ENCODE measurements at regions of chr11 and their contacts with region 1.

Region 1: GRCh38 chr11:76207642-76208401 is 1.5 kb upstream of the WNT11 start:
- DNase-seq: peak; percentile 59 to 88 (median 76)
- ATAC-seq: peak; percentile 78
- H3K4me3 ChIP-seq: peak overlapping the region; percentile 63 to 66
- H3K4me3 Mint-ChIP-seq: peak overlapping the region; percentile 82
- H3K27ac ChIP-seq: no peak overlapping the region
- H3K27ac Mint-ChIP-seq: no peak overlapping the region
- H3K4me1 ChIP-seq: peaks cover 39% of the 10 kb centered on the region
- H3K4me1 Mint-ChIP-seq: peaks cover 24% of the 10 kb centered on the region
- H3K27me3 ChIP-seq: peaks cover 13 to 42% of the 10 kb centered on the region in 2 experiments
- H3K27me3 Mint-ChIP-seq: peaks cover 33% of the 10 kb centered on the region
- CTCF ChIP-seq: peak; percentile 90

Region 2: GRCh38 chr11:75195121-75195551 is 1012.7 kb before region 1 on chr11:
- CTCF ChIA-PET with region 1: no interaction called
- POLR2A ChIA-PET with region 1: no interaction called
- intact Hi-C with region 1: no loop called
- DNase-seq: no peak
- ATAC-seq: no peak
- H3K4me3 ChIP-seq: no peak overlapping the region
- H3K4me3 Mint-ChIP-seq: no peak overlapping the region
- H3K27ac ChIP-seq: no peak overlapping the region
- H3K27ac Mint-ChIP-seq: no peak overlapping the region
- H3K4me1 ChIP-seq: no peaks in the 10 kb centered on the region
- H3K4me1 Mint-ChIP-seq: no peaks in the 10 kb centered on the region
- H3K27me3 ChIP-seq: peaks cover 0 to 3% of the 10 kb centered on the region in 2 experiments
- H3K27me3 Mint-ChIP-seq: peaks cover 3% of the 10 kb centered on the region
- CTCF ChIP-seq: no peak

Region 3: GRCh38 chr11:75814686-75815344 is 393.0 kb before region 1 on chr11 and contains the start of gene UVRAG:
- CTCF ChIA-PET with region 1: interaction called, 3 read pairs
- POLR2A ChIA-PET with region 1: no interaction called
- intact Hi-C with region 1: loop called in 1 of 2 experiments (anchors 10 kb)
- DNase-seq: peak; percentile 97 to 99 (median 98)
- ATAC-seq: peak; percentile 88
- H3K4me3 ChIP-seq: peak within 1 kb of the TSS; percentile 65 to 93
- H3K4me3 Mint-ChIP-seq: no peak within 1 kb of the TSS
- H3K27ac ChIP-seq: peak within 1 kb of the TSS; percentile 77 to 88
- H3K27ac Mint-ChIP-seq: peak within 1 kb of the TSS; percentile 97
- H3K4me1 ChIP-seq: peaks cover 23% of the 10 kb centered on the region
- H3K4me1 Mint-ChIP-seq: peaks cover 21% of the 10 kb centered on the region
- H3K27me3 ChIP-seq: no peaks in the 10 kb centered on the region
- H3K27me3 Mint-ChIP-seq: no peaks in the 10 kb centered on the region
- CTCF ChIP-seq: no peak
- total RNA-seq, gene UVRAG: 14.3 to 15.1 TPM

Region 4: GRCh38 chr11:76102802-76103201 is 105.0 kb before region 1 on chr11:
- CTCF ChIA-PET with region 1: no interaction called
- POLR2A ChIA-PET with region 1: no interaction called
- intact Hi-C with region 1: no loop called
- DNase-seq: no peak
- ATAC-seq: no peak
- H3K4me3 ChIP-seq: no peak overlapping the region
- H3K4me3 Mint-ChIP-seq: no peak overlapping the region
- H3K27ac ChIP-seq: no peak overlapping the region
- H3K27ac Mint-ChIP-seq: no peak overlapping the region
- H3K4me1 ChIP-seq: no peaks in the 10 kb centered on the region
- H3K4me1 Mint-ChIP-seq: no peaks in the 10 kb centered on the region
- H3K27me3 ChIP-seq: no peaks in the 10 kb centered on the region
- H3K27me3 Mint-ChIP-seq: no peaks in the 10 kb centered on the region
- CTCF ChIP-seq: no peak

Region 5: DNA sequence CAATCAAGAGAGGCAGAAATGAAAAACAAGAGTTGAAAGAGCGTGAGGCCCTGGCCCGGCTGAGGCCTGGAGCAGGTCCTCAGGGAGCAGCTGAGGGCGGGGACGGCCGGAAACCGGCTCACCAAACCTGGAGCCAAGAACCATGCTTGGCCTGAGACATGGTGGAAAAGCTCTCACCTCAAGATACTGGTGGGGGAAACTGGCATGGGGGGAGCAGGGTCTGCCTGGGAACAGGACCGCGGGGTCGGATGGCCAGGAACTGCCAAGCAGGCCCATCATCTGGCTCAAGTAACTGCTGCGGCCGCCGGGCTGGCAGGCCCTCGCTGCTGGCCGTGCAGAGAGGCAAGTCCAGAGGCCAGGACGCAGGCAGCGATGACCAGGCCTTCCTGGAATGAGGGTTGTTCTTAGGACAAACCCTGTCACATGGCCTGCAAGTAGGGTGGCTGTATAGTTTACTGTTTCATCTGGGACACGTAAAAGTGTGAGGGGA is 17.3 kb after region 1 on chr11:
- CTCF ChIA-PET with region 1: interaction called, 58 read pairs
- POLR2A ChIA-PET with region 1: no interaction called
- intact Hi-C with region 1: no loop called
- DNase-seq: peak in 1 of 9 experiments; percentile 9
- ATAC-seq: no peak
- H3K4me3 ChIP-seq: no peak overlapping the region
- H3K4me3 Mint-ChIP-seq: no peak overlapping the region
- H3K27ac ChIP-seq: no peak overlapping the region
- H3K27ac Mint-ChIP-seq: no peak overlapping the region
- H3K4me1 ChIP-seq: no peaks in the 10 kb centered on the region
- H3K4me1 Mint-ChIP-seq: peaks cover 2% of the 10 kb centered on the region
- H3K27me3 ChIP-seq: no peaks in the 10 kb centered on the region
- H3K27me3 Mint-ChIP-seq: no peaks in the 10 kb centered on the region
- CTCF ChIP-seq: no peak

Region 6: DNA sequence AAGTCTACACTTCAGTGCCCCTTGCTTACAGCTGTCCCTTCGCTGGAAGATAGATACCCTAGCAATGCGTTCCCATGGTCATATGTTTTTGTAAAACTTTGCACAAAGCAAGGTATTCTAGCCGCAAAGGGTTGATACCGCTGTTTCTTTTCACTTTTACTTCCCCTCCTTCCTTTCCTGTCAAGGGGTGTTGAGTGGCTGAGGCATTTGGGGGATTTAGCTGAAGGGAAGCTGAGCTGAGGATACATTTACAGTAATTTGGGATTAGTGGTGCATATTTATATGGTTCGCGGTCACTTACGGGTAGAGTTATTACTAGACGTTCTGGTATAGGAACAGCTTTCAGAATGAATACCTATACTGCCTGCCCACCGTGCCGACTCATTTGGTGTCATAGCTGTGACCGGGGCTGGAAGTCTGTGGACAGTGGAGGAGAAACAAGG is 85.4 kb after region 1 on chr11:
- CTCF ChIA-PET with region 1: interaction called, 29 read pairs
- POLR2A ChIA-PET with region 1: no interaction called
- intact Hi-C with region 1: no loop called
- DNase-seq: no peak
- ATAC-seq: peak; percentile 36
- H3K4me3 ChIP-seq: no peak overlapping the region
- H3K4me3 Mint-ChIP-seq: peak overlapping the region; percentile 47
- H3K27ac ChIP-seq: no peak overlapping the region
- H3K27ac Mint-ChIP-seq: peak overlapping the region; percentile 79
- H3K4me1 ChIP-seq: peaks cover 22% of the 10 kb centered on the region
- H3K4me1 Mint-ChIP-seq: peaks cover 25% of the 10 kb centered on the region
- H3K27me3 ChIP-seq: no peaks in the 10 kb centered on the region
- H3K27me3 Mint-ChIP-seq: no peaks in the 10 kb centered on the region
- CTCF ChIP-seq: no peak

Region 7: DNA sequence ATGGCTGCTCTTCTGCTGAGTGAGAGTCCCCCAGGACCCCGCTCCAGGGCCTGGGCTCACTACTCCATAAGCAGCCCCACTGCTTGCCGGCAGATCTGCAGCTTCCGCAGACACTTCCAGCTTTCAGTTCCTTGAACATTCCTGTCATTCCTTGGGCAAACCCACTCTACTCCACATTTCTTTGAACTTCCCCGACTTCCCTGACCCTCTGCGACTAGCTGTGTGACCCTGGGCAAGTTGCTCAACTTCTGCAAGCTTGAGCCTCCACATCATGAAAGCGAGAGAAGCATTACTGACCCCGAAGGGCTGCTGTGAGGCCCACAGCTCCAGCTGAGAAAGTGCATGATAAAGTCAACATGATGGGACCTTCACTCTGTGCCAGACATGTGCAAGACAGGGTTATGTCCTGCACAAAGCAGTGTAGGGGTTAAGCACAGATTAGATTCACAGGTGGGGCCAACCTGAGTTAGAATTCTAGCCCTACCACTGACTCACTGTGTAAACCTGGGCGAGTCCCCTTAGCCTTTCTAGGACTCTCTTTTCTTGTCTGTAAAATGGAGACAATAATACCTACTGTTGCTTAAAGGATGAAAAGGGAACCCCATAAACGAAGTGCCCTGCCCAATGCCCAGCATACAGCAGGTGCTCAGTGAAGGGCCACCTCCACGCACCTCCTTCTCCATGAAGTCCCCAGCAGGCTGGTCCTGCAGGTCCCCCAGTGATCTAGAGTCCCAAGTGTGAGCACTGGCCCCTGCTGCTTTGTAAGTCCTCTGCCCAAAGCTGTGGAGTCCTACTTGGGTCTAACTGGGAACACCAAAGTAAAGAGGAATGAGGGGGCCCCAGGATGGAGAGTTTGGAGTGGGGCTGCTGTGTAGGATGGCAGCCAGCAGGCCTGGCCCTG is 121.5 kb after region 1 on chr11:
- CTCF ChIA-PET with region 1: interaction called, 397 read pairs
- POLR2A ChIA-PET with region 1: no interaction called
- intact Hi-C with region 1: no loop called
- DNase-seq: no peak
- ATAC-seq: no peak
- H3K4me3 ChIP-seq: no peak overlapping the region
- H3K4me3 Mint-ChIP-seq: no peak overlapping the region
- H3K27ac ChIP-seq: no peak overlapping the region
- H3K27ac Mint-ChIP-seq: no peak overlapping the region
- H3K4me1 ChIP-seq: no peaks in the 10 kb centered on the region
- H3K4me1 Mint-ChIP-seq: no peaks in the 10 kb centered on the region
- H3K27me3 ChIP-seq: no peaks in the 10 kb centered on the region
- H3K27me3 Mint-ChIP-seq: peaks cover 2% of the 10 kb centered on the region
- CTCF ChIP-seq: no peak

Region 8: DNA sequence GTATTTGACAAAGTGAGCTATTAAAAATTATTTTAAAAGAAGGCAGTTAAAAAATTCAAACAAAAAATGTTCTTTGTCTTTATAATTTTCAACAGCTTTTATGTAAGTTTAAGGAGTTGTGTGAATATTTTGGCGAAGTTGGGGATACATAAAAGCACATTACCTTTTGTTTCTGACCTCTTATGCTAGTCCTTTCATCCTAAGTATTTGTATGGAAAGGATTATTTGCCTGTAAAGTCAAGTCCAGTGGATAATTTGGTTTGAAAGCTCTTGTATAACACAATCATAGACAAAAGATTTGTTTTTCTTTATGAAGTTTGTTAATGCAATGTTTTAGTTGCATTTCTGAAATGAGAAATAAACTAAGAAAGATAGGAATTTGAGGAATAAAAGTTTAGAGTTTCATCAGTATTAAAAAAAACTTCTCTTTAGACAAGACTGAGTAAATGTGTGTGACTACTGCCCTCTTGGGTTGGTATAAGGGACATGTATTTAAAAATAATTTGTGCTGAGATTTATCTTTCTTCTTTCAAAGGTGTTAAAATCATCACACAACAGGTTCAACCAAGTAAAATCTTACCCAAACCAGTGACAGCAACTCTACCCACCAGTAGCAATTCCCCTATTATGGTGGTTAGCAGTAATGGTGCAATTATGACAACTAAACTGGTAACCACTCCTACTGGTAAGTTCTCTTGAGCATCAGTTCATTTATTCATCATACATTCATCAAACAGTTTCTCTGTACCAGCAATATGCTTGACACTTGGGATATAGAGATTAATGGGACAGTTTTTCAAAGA is 305.2 kb after region 1 on chr11:
- CTCF ChIA-PET with region 1: no interaction called
- POLR2A ChIA-PET with region 1: no interaction called
- intact Hi-C with region 1: loop called in 1 of 2 experiments (anchors 5 kb)
- DNase-seq: peak in 2 of 9 experiments; percentile 30 to 51
- ATAC-seq: no peak
- H3K4me3 ChIP-seq: no peak overlapping the region
- H3K4me3 Mint-ChIP-seq: no peak overlapping the region
- H3K27ac ChIP-seq: no peak overlapping the region
- H3K27ac Mint-ChIP-seq: peak overlapping the region; percentile 64
- H3K4me1 ChIP-seq: no peaks in the 10 kb centered on the region
- H3K4me1 Mint-ChIP-seq: no peaks in the 10 kb centered on the region
- H3K27me3 ChIP-seq: no peaks in the 10 kb centered on the region
- H3K27me3 Mint-ChIP-seq: no peaks in the 10 kb centered on the region
- CTCF ChIP-seq: peak; percentile 25